ENCODE measurements at regions of chr20 and their contacts with region 1.

Region 1: DNA sequence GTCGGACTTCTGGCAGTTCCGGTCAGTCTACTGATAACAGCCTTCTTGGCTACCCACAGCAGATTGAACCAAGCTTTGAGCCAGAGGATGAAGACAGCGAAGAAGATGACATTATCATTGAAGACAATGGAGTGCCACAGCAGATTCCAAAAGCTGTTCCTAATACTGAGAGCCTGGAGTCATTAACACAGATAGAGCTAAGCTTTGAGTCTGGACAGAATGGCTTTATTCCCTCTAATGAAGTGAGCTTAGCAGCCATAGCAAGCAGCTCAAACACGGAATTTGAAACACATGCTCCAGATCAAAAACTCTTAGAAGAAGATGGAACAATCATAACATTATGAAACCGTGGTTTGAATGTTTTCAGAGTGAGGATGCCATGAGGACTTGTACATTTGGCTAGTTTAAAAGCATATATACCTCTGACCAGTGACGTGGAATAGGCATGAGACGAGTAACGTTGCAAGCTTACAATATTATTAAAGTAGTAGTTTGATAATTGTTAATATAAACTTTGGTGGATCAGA is 18.8 kb downstream of the PARD6B start:
- DNase-seq: no peak
- H3K4me3 ChIP-seq: no peak overlapping the region
- H3K27ac ChIP-seq: no peak overlapping the region
- H3K4me1 ChIP-seq: peaks cover 0 to 4% (median 3%) of the 10 kb centered on the region in 4 experiments
- H3K27me3 ChIP-seq: no peaks in the 10 kb centered on the region

Region 2: DNA sequence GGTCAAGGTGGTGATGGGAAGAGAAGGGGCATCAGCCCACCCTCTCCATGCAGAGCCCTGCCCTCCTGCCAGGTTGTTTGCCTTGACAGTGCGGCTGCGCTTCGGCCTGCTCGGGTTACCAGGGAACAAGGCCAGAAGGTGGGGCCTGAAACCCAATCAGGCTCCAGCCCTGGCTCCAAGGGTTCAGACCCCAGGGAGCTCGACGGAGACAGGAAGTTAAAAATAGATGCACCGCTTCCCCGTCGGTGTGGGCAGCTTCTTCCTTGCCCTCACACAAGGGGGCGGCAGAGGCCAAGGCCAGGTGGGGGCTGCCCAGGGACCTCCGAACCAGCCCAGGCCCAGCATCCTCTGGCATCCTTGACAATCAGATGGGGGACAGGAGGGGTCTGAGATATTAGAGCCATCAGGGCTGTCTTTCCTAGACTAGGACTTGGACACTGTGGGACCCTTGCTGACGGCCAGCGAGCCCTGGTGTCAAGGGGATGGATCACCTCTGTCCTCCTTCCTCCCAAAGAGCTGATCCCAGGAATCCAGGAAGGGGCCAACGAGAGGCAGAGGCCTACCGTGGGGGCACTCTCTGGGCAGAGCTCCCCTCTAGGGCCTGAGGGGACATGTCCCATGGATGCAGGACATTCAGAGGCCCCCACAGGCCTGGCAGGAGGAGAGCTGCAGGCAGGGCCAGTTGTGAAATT is 124.1 kb before region 1 on chr20:
- CTCF ChIA-PET with region 1: interaction called, 15 read pairs
- POLR2A ChIA-PET with region 1: no interaction called
- DNase-seq: peak; percentile 33 to 66 (median 65)
- H3K4me3 ChIP-seq: no peak overlapping the region
- H3K27ac ChIP-seq: no peak overlapping the region
- H3K4me1 ChIP-seq: peaks cover 0 to 2% (median 0%) of the 10 kb centered on the region in 4 experiments
- H3K27me3 ChIP-seq: no peaks in the 10 kb centered on the region

Region 3: DNA sequence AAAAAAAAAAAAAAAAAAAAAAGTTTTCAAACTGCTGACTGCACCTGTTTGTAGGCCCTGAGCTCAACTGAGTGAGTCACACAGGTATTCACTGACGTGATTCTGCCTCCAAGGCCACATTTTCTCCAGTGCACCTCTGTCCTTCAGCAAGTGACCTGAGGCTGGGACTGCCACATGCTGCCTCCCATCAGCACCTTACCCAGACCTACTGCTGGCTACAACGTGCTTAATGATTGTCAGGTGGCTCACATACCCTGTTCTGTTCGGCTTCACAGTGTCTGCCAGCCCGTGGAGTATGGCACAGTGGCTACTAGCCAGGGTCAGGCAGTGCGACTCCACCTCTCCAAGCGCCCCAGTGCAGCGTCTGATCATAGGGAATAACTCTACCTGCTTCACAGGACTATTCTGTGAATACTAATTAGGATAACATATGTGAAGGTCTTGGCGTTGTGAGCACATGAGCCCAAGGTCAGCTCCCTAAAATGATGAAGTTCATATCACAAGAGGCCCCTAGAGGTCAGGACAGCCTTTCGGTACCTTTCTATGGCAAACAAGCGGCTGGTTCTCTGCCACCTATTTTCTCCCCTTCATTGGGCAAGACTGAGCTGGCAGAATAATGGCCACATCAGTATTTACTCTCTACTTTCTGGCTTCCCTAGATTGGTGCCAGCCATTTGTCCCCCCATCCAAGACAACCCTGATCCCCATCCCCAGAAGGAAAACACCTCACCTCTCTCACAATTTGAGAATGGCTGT is 86.9 kb before region 1 on chr20:
- CTCF ChIA-PET with region 1: interaction called, 17 read pairs
- POLR2A ChIA-PET with region 1: no interaction called
- DNase-seq: peak; percentile 31 to 51 (median 48)
- H3K4me3 ChIP-seq: no peak overlapping the region
- H3K27ac ChIP-seq: no peak overlapping the region
- H3K4me1 ChIP-seq: peaks cover 0 to 7% (median 3%) of the 10 kb centered on the region in 4 experiments
- H3K27me3 ChIP-seq: no peaks in the 10 kb centered on the region

Measured in common myeloid progenitor, CD34-positive (primary cell).